Activated B cell treated with CpG ODN at 0.5 μM for 24 hours (primary cell): ENCODE measurements at regions of chr7 and their contacts with region 1.

Region 1: DNA sequence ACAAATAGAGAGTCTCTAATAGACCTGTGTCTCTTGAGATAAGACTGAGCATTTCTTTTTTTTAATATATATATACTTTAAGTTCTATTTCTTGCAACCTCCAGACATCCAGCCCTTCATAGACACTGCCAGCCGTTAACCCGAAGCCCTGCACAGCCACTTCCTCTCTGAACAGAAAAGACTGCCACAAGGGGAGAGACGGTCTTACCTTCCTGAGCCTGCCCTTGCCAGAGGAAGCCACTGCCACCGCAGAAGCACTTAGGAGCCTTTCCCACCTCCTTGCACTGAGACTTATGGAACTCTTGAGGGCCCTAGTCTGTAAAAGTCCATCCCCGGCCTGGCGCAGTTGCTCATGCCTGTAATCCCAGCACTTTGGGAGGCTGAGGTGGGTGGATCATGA is 31.8 kb upstream of the PRSS1 start:
- DNase-seq: no peak
- ATAC-seq: no peak
- H3K4me3 Mint-ChIP-seq: no peak overlapping the region
- H3K27ac Mint-ChIP-seq: no peak overlapping the region
- H3K4me1 Mint-ChIP-seq: peaks cover 28% of the 10 kb centered on the region
- H3K27me3 Mint-ChIP-seq: peaks cover 5% of the 10 kb centered on the region
- CTCF ChIP-seq: no peak

Region 2: DNA sequence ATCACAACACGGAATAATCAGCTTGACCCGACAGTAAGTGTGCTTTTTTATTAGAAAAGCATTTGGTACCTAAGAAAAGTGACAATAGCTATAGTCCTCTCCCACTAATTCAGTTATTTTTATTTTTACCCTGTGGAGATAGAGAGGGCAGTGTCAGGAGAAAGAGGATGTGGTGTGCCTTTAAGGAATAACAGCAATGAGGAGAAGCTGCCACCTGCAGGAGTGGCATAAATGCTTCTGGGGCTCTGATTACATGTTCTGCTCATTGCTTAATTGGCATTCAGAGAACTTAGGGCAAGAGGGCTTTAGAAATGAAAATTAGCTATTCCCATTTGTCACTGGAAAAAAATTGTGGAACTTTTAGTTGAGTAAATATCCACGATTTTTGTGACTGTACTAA is 1075.6 kb before region 1 on chr7:
- CTCF ChIA-PET with region 1: no interaction called
- POLR2A ChIA-PET with region 1: no interaction called
- intact Hi-C with region 1: no loop called
- DNase-seq: no peak
- ATAC-seq: no peak
- H3K4me3 Mint-ChIP-seq: no peak overlapping the region
- H3K27ac Mint-ChIP-seq: no peak overlapping the region
- H3K4me1 Mint-ChIP-seq: peaks cover 2% of the 10 kb centered on the region
- H3K27me3 Mint-ChIP-seq: no peaks in the 10 kb centered on the region
- CTCF ChIP-seq: no peak

Region 3: GRCh38 chr7:142535123-142535779 is 182.2 kb before region 1 on chr7:
- CTCF ChIA-PET with region 1: no interaction called
- POLR2A ChIA-PET with region 1: no interaction called
- intact Hi-C with region 1: no loop called
- DNase-seq: no peak
- ATAC-seq: peak; percentile 80
- H3K4me3 Mint-ChIP-seq: peak overlapping the region; percentile 33
- H3K27ac Mint-ChIP-seq: no peak overlapping the region
- H3K4me1 Mint-ChIP-seq: peaks cover 12% of the 10 kb centered on the region
- H3K27me3 Mint-ChIP-seq: peaks cover 4% of the 10 kb centered on the region
- CTCF ChIP-seq: no peak

Region 4: GRCh38 chr7:142733271-142733670 is 15.8 kb after region 1 on chr7:
- CTCF ChIA-PET with region 1: interaction called, 5 read pairs
- POLR2A ChIA-PET with region 1: interaction called, 4 read pairs
- intact Hi-C with region 1: loop called (anchors 2 kb)
- DNase-seq: no peak
- ATAC-seq: no peak
- H3K4me3 Mint-ChIP-seq: peak overlapping the region; percentile 24
- H3K27ac Mint-ChIP-seq: no peak overlapping the region
- H3K4me1 Mint-ChIP-seq: peaks cover 10% of the 10 kb centered on the region
- H3K27me3 Mint-ChIP-seq: no peaks in the 10 kb centered on the region
- CTCF ChIP-seq: no peak